ENCODE measurements at regions of chr17 and their contacts with region 1.

Region 1: DNA sequence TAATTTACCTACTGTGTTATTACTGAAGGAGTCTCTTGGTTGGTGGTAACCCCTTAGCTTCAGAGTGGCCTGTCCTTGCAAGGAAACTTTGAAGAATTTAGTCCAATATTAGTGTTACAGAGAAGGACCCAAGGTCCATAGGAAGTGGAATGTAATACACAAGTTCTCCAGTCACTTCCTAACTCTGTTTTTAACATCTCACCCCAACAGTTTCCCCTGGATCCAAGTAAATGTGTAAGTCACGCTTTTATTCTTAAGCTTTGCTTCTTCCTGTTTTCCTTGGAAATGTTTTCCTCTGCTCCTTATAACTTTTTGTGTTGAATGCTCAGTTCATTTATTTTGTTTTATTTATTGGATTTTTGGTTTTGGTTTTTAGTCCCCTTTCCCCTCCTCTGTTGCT is 25.9 kb upstream of the RPRML start:
- DNase-seq: no peak
- ATAC-seq: no peak
- H3K4me3 ChIP-seq: no peak overlapping the region
- H3K27ac ChIP-seq: no peak overlapping the region
- H3K4me1 ChIP-seq: no peaks in the 10 kb centered on the region
- H3K27me3 ChIP-seq: no peaks in the 10 kb centered on the region
- CTCF ChIP-seq: no peak
- POLR2A ChIP-seq: no peak

Region 2: DNA sequence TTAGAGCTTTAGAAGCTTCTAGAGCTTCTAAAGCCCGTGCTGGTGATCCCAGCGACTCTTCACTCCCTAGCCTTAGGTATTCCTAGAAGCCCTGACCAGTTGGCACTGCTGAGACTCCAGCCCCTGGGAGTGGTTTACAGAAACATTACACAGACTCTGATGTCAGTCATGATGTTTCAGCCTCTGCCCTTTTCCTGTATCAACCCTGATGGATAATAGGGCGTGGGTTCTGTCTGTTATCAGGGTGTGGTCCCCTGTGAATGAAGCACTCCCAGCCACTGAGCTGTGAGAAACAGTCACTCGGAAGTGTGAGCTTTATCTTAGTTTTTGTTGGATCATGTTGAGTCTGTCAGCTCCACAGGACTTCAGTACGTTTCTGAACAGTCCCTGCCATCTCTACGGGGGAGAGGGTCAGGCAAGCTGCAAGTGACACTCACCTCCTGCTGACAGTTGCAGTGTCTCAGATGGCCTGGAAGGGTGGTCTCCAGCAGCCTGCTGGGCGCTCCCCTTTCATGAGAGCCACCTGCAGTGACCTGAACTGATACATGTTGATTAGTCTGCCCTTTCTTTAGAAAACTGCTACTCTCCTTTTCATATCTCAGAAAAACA is 69.1 kb before region 1 on chr17:
- in situ Hi-C with region 1: loop called in 1 of 4 experiments (anchors 5 kb)
- intact Hi-C with region 1: no loop called
- DNase-seq: no peak
- ATAC-seq: no peak
- H3K4me3 ChIP-seq: no peak overlapping the region
- H3K27ac ChIP-seq: no peak overlapping the region
- H3K4me1 ChIP-seq: no peaks in the 10 kb centered on the region
- H3K27me3 ChIP-seq: no peaks in the 10 kb centered on the region
- CTCF ChIP-seq: no peak
- POLR2A ChIP-seq: no peak

Region 3: DNA sequence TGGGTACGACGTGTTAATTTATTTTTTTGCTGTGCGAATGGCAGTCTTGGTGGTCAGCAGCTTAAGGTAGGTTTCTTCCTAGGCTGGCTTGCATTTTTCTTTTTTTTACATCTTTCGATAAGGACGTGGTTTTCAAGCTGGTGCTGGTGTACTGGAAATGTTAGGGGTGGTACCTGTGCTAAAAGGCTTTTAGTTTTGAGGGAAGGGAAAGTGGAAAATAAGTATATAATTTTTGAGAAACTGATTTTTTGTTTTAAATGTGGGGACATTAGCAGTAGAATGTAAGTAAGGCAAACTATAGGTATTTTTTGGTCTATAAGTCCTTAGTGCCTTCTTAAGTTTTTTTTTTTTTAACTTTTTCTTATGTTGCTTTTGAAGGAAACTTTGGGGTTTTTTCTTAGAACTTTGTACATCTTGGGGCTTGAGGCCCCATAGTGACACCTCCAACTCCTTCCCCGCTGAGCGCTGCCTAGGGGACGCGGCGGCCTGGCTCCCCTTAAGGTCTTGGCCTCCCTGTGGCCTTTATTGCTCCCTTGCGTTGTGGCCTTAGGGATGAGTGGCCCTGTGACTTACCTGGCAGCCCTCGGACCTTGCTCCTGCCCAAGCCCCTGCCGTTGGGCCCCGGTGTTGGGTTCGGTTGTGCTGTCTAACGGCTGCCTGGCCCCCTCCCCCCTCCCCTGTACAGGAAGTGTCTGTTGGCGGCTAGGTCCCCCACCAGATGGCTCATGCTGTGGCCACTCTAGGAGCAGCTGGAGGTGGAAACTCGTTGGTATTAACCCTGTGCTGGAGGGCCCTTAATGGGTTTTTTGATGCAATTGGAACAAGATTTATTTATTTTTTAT is 62.2 kb after region 1 on chr17:
- in situ Hi-C with region 1: no loop called
- intact Hi-C with region 1: no loop called
- DNase-seq: peak; percentile 68 to 81
- ATAC-seq: peak; percentile 97 to 98
- H3K4me3 ChIP-seq: peak overlapping the region; percentile 63 to 98 (median 78)
- H3K27ac ChIP-seq: peak overlapping the region; percentile 88 to 94 (median 90)
- H3K4me1 ChIP-seq: peaks cover 5 to 7% of the 10 kb centered on the region in 2 donors
- H3K27me3 ChIP-seq: no peaks in the 10 kb centered on the region
- CTCF ChIP-seq: peak in 4 of 5 experiments; percentile 5 to 34 (median 17)
- POLR2A ChIP-seq: peak in 1 of 2 donors; percentile 58